ENCODE measurements at regions of chr18 and their contacts with region 1.

Region 1: DNA sequence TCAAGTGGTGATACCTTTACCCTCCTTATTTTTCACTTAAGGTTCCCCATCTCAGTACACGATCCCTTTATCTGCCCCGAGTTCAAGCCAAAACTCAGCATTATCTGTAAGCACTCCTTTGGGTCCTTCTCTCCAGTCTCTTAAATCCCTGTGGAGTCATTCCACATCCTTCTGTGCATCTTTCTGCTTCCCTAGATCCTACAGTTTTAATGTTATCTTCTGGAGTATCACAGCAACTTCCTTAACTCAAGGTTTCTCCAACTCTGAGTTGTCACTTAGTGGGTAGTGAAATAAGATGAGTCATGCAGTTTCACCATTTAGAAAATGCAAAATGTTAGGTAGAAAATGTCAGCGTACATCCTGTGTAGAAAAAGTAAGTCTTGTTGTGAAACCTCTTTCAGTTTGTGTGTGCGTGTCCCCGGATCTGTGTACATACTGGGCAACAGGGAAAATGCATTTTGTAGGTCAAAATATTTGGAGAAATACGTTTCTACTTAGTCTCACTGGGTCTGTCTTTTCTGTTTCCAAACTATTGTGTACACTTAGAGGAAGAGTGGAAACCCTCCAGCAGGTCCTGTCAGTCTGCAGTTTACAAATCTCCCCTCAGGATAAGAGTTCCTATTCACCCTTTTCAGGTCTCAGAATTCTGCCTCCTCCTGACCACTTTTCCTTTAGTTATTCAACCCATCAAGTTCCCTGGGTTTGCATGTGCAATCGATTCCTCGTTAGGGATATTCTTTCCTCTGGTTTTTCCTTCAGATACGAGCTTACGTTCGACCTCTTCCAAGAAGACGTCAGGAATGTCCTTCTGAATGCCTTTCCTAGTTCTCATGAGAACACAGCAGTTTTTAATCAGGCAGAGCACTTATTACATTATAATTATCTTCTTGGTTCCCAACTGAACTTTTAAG is 154.8 kb downstream of the TGIF1 start:
- DNase-seq: peak; percentile 85 to 95 (median 95)
- H3K4me3 ChIP-seq: peak overlapping the region; percentile 23 to 77 (median 49)
- H3K4me3 Mint-ChIP-seq: no peak overlapping the region
- H3K27ac ChIP-seq: peak overlapping the region; percentile 87 to 96
- H3K27ac Mint-ChIP-seq: no peak overlapping the region
- H3K4me1 ChIP-seq: peaks cover 45 to 48% of the 10 kb centered on the region in 2 donors
- H3K4me1 Mint-ChIP-seq: peaks cover 3% of the 10 kb centered on the region
- H3K27me3 ChIP-seq: no peaks in the 10 kb centered on the region
- H3K27me3 Mint-ChIP-seq: no peaks in the 10 kb centered on the region
- CTCF ChIP-seq: no peak

Region 2: DNA sequence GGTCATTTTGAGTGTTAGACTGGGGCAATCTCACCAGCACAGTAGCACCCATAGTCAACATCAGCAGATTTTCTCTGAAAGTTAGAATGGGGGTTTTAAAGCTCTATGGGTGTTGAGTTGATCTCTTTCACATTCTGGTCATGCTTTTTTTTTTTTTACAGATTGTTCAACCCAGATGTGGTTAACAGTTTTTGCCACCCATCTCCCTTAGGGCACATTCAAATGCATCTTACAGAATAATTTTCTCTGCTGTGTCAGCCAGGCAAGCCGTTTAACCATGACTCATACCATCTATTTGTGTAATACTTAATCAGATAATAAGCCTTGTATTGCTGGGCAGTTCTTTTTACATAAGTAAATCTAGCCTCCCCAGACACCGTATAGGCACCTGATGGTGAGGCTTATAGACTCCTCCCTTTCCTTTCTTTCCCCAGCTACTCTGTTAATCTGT is 92.8 kb before region 1 on chr18:
- intact Hi-C with region 1: no loop called
- DNase-seq: peak in 1 of 3 donors; percentile 8
- H3K4me3 ChIP-seq: no peak overlapping the region
- H3K4me3 Mint-ChIP-seq: no peak overlapping the region
- H3K27ac ChIP-seq: no peak overlapping the region
- H3K27ac Mint-ChIP-seq: no peak overlapping the region
- H3K4me1 ChIP-seq: no peaks in the 10 kb centered on the region
- H3K4me1 Mint-ChIP-seq: peaks cover 4% of the 10 kb centered on the region
- H3K27me3 ChIP-seq: no peaks in the 10 kb centered on the region
- H3K27me3 Mint-ChIP-seq: no peaks in the 10 kb centered on the region
- CTCF ChIP-seq: no peak

Region 3: GRCh38 chr18:3665780-3666525 is 61.2 kb after region 1 on chr18:
- intact Hi-C with region 1: loop called (anchors 5 kb)
- DNase-seq: peak; percentile 68 to 80 (median 77)
- H3K4me3 ChIP-seq: peak overlapping the region in 1 of 3 experiments; percentile 54
- H3K4me3 Mint-ChIP-seq: peak overlapping the region; percentile 71 to 89
- H3K27ac ChIP-seq: no peak overlapping the region
- H3K27ac Mint-ChIP-seq: peak overlapping the region in 4 of 7 donors; percentile 21 to 61 (median 50)
- H3K4me1 ChIP-seq: peaks cover 33 to 42% of the 10 kb centered on the region in 2 donors
- H3K4me1 Mint-ChIP-seq: peaks cover 36% of the 10 kb centered on the region
- H3K27me3 ChIP-seq: no peaks in the 10 kb centered on the region
- H3K27me3 Mint-ChIP-seq: peaks cover 0 to 3% (median 0%) of the 10 kb centered on the region in 3 donors
- CTCF ChIP-seq: peak; percentile 96

Region 4: GRCh38 chr18:3747176-3747973 is 142.6 kb after region 1 on chr18:
- intact Hi-C with region 1: loop called in 1 of 2 experiments (anchors 10 kb)
- DNase-seq: peak; percentile 94 to 99 (median 98)
- H3K4me3 ChIP-seq: peak overlapping the region in 1 of 3 experiments; percentile 30
- H3K4me3 Mint-ChIP-seq: peak overlapping the region in 1 of 2 donors; percentile 42
- H3K27ac ChIP-seq: peak overlapping the region; percentile 81 to 86
- H3K27ac Mint-ChIP-seq: peak overlapping the region; percentile 87 to 97 (median 96)
- H3K4me1 ChIP-seq: peaks cover 33 to 41% of the 10 kb centered on the region in 2 donors
- H3K4me1 Mint-ChIP-seq: peaks cover 37% of the 10 kb centered on the region
- H3K27me3 ChIP-seq: no peaks in the 10 kb centered on the region
- H3K27me3 Mint-ChIP-seq: peaks cover 0 to 2% (median 0%) of the 10 kb centered on the region in 3 donors
- CTCF ChIP-seq: no peak